ENCODE measurements at regions of chr2 and their contacts with region 1.

Region 1: DNA sequence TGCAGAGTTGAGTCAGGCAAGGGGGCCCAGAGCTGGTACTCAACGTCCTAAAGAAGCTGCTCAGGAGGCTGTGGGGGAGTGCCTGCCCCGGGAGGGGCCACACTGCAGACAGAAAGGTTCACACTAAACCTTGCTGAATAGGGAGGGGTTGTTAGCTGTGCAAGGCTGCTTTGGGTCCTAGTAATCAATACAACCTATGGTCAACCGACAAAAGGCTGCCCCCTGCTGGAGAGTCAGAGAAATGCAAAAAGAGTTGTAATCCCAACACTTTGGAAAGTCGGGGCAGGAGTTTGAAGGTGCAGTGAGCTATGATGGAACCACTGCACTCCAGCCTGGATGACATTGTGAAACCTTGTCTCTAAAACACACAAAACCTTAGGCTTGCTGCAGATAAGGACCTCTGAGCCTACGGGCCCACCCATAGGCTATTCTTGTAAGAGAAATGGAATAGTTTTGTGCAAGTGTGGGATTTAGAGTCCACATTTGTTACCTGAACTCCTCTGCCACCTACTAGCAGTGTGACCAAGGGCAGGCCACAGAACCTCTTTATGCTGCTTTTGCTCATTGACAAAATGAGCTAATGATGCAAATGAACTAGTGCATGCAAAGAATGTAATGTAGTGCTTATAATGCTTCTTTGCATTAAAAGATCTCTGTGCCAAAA is 81.5 kb downstream of the PRPF40A start:
- DNase-seq: peak; percentile 46 to 55 (median 54)
- H3K4me3 ChIP-seq: no peak overlapping the region
- H3K27ac ChIP-seq: no peak overlapping the region
- H3K4me1 ChIP-seq: no peaks in the 10 kb centered on the region
- H3K27me3 ChIP-seq: no peaks in the 10 kb centered on the region

Region 2: GRCh38 chr2:152036611-152037469 is 598.9 kb before region 1 on chr2:
- CTCF ChIA-PET with region 1: interaction called, 22 read pairs
- POLR2A ChIA-PET with region 1: no interaction called
- DNase-seq: peak; percentile 79 to 88 (median 82)
- H3K4me3 ChIP-seq: no peak overlapping the region
- H3K27ac ChIP-seq: no peak overlapping the region
- H3K4me1 ChIP-seq: peaks cover 0 to 26% (median 7%) of the 10 kb centered on the region in 4 experiments
- H3K27me3 ChIP-seq: no peaks in the 10 kb centered on the region

Region 3: DNA sequence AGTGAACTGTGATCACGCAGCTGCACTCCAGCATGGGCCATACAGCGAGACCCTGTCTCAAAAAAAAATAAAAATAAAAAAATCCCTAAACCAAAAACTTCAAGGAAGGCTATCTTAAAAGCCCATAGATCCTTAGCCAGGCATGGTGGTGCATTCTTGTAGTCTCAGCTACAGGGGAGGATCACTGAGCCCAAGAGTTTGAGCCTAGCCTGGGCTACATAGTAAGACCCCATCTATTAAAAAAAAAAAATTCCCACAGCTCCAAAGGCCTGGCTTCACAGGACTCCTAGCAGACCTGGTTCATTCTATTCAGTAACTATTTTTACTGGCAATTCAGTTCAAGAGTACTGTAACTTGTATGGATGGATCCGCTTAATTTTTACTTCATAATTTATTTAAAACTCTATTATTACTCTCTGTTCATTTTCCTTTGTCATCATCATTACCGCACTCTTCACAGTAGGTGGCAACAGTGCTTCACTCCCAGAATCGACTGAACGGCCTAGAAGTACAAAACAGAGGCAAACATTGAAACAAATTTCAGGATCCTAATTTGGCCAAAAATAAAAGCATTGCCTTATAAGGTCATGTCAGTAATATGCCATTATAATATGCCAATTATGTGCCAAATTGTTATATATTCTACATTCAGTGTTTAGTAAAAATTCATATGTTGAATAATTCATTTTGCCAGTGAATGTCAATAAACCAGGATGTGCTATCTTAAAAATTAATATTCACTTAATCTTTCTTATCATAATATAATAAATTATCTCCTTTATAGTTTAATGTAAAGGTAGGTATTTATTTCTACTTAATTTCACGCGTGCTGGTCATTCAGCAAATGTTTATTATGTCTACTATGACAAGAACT is 445.9 kb before region 1 on chr2:
- CTCF ChIA-PET with region 1: interaction called, 16 read pairs
- POLR2A ChIA-PET with region 1: no interaction called
- DNase-seq: peak; percentile 55 to 82 (median 80)
- H3K4me3 ChIP-seq: no peak overlapping the region
- H3K27ac ChIP-seq: no peak overlapping the region
- H3K4me1 ChIP-seq: no peaks in the 10 kb centered on the region
- H3K27me3 ChIP-seq: no peaks in the 10 kb centered on the region

Region 4: DNA sequence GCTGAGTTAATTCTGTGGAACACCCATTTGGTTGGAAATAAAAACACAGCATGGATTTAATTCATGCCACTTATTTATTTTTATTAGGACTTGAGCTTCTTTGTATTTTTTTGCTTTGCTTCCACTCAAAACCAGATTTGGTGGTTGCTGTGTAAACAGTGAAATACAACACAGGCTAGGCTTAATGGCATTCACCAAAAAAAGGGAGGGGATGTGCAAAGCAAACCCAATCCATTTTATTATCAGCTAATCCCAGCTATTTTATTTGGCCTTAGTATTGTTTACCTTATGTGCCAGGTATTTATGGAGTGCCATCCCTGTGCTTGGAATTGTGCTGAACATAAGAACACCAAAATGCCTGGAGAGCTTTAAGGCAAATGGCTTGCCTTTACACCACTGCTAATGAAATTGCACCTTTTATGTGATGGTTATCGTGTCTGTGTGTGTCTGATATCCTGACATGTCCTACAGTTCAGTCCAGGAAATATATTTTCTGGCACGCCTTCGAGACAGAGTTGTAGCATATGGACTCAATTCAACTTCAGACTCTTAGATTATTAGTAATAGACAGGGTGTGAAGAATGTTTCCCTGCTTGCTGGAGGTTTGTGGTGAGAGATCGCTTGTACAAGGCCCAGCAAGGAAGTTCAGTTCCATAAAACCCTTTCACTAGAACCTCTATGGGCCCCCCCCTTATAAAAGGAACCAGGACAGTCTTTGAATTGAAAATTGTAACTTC is 18.1 kb before region 1 on chr2:
- CTCF ChIA-PET with region 1: interaction called, 10 read pairs
- POLR2A ChIA-PET with region 1: no interaction called
- DNase-seq: no peak
- H3K4me3 ChIP-seq: no peak overlapping the region
- H3K27ac ChIP-seq: no peak overlapping the region
- H3K4me1 ChIP-seq: peaks cover 4 to 16% (median 7%) of the 10 kb centered on the region in 4 experiments
- H3K27me3 ChIP-seq: no peaks in the 10 kb centered on the region

Region 5: DNA sequence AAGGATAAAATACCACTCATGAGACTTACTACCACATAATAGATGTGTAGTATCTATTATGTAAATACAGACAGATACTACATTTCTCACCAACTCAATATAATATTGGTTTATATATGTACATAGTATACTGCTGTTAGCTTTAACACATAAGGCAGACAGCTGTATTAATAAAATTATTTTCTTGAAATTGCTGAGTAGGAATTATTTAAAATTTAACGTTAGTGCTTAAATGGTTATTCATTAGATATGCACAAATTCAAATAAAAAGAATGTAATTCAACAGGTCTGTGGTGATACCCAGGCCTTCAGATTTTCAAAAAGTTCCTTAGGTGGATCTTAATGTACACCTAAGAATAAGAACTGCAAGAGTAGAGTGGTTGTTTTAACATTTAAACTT is 22.5 kb after region 1 on chr2:
- CTCF ChIA-PET with region 1: interaction called, 10 read pairs
- POLR2A ChIA-PET with region 1: interaction called, 7 read pairs
- DNase-seq: no peak
- H3K4me3 ChIP-seq: no peak overlapping the region
- H3K27ac ChIP-seq: no peak overlapping the region
- H3K4me1 ChIP-seq: no peaks in the 10 kb centered on the region
- H3K27me3 ChIP-seq: no peaks in the 10 kb centered on the region

Region 6: GRCh38 chr2:152740743-152741328 is 105.1 kb after region 1 on chr2:
- CTCF ChIA-PET with region 1: no interaction called
- POLR2A ChIA-PET with region 1: no interaction called
- DNase-seq: peak; percentile 67 to 80 (median 80)
- H3K4me3 ChIP-seq: no peak overlapping the region
- H3K27ac ChIP-seq: no peak overlapping the region
- H3K4me1 ChIP-seq: no peaks in the 10 kb centered on the region
- H3K27me3 ChIP-seq: no peaks in the 10 kb centered on the region

Measured in common myeloid progenitor, CD34-positive (primary cell).